ENCODE measurements at regions of chr4 and their contacts with region 1.

Region 1: DNA sequence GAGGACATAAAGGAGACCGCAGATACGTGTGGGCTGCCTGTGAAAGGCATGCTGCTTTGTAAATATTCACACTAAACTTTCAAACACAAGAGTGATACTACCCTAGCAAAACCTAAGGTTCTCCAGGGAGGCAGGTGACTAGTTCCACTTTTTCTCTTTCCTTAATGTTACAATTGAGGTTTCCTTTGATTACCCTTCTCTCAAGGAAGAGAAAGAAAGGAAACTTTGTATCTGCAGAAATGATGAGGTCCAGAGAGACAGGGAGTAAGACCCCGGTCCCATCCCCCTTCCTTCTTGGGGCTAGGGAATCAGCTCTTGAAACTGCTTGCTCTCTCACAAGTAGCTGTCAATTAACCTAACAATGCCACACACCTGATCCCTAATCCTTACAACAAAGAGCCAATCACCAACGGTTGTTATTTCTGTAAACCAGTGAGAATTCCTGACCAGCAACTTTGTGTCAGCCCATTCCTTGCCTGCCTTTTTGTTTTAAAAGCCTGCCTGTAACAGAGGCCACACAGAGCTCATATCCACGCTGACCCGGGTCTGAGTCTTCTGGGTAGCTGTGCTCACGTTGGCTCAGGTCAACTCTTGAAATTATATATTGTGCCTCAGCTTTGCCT is 754.8 kb upstream of the FRG1 start:
- DNase-seq: no peak
- ATAC-seq: no peak
- H3K4me3 ChIP-seq: no peak overlapping the region
- H3K27ac ChIP-seq: no peak overlapping the region
- H3K4me1 ChIP-seq: no peaks in the 10 kb centered on the region
- H3K27me3 ChIP-seq: no peaks in the 10 kb centered on the region
- CTCF ChIP-seq: no peak

Region 2: DNA sequence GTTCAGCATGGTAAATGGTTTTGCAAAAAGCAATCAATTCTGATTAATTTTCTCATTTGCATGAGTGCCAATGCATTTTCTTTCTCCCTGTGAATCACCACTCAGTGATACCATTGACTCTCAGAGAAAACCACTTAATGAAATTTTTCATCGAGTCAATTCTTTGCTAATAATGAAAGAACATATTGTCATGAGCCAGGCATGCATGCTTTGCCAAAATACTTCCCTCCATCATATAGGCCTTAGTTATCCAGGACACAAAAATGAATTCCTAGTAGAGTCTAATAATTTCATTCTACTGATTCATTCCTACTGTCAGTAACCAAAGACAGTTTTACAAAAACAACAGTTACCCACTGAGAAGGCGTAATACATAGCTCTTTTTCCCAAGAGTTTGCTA is 366.7 kb before region 1 on chr4:
- CTCF ChIA-PET with region 1: interaction called, 13 read pairs
- POLR2A ChIA-PET with region 1: no interaction called
- in situ Hi-C with region 1: no loop called
- intact Hi-C with region 1: no loop called
- DNase-seq: no peak
- ATAC-seq: no peak
- H3K4me3 ChIP-seq: no peak overlapping the region
- H3K27ac ChIP-seq: no peak overlapping the region
- H3K4me1 ChIP-seq: peaks cover 11% of the 10 kb centered on the region
- H3K27me3 ChIP-seq: no peaks in the 10 kb centered on the region
- CTCF ChIP-seq: no peak

Region 3: DNA sequence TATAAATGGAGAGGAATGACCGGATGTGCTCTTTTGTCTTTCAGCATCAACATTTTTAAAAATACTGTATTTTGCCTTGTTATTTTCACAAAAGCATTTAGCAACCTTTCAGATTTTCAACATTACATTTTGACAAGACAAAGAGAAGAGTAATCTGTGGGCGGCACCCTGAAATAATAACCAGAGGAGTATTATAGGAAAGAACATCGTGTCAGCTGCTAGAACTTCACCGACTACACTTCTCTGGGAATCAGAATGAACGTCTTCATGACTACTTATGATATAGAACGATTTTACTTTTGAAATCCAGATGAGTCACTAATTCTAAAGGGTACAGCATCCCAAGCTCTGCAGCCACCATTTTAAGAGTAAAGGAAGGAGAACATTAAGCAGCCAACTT is 223.2 kb after region 1 on chr4:
- CTCF ChIA-PET with region 1: no interaction called
- POLR2A ChIA-PET with region 1: no interaction called
- in situ Hi-C with region 1: no loop called
- intact Hi-C with region 1: no loop called
- DNase-seq: no peak
- ATAC-seq: no peak
- H3K4me3 ChIP-seq: no peak overlapping the region
- H3K27ac ChIP-seq: no peak overlapping the region
- H3K4me1 ChIP-seq: no peaks in the 10 kb centered on the region
- H3K27me3 ChIP-seq: no peaks in the 10 kb centered on the region
- CTCF ChIP-seq: no peak

Measured in Panc1 (cell line).